ENCODE measurements at regions of chr7 and their contacts with region 1.

Region 1: DNA sequence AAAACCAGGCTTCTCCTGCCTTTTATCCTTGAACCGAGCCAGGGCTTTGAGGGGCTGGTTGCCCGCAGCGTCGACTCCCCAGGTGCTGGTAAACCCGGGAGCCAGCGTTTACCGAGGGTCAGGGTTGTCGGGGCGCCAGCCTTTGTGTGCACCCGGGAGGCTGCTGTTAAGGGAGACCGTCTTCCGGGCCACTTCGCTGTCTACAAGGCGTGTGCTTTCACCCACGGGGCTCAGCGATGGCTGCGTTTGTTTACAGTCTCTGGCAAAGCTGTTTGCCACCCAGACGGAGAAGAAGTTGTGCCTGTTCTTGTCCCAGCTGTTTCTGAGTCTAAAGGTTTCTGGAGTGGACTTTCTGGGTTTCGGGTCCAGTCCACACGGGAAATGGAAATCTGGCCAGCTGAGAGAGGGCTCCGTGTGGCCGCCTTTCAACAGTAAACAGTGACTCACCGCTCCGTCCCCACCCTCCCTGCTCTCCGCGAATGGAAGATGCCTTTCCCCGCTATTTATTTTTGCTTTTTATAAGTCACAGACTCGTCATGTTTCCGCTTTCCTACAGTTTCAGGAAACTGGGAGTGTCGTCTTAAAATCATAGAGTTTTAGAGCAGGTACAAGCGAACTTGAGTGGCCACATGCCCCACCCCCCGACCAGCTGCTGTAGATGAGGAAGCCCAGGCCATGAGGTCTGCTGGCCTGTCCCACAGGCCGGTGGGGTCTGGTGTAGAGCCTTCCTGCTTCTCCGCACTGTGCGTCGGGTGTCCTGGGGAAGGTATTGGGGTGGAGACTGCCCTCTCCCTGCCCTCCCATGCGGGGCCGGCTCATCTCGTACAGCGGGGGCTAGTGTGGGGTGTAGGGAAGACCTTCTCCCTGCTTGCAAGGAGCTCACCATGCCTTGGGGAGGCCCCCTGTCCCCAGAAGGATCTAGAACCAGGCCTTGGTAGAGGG is 2.3 kb downstream of the MAFK start:
- DNase-seq: peak; percentile 78
- ATAC-seq: peak; percentile 65
- H3K4me3 Mint-ChIP-seq: peak overlapping the region; percentile 89
- H3K27ac Mint-ChIP-seq: peak overlapping the region; percentile 89
- H3K4me1 Mint-ChIP-seq: peaks cover 27% of the 10 kb centered on the region
- H3K27me3 Mint-ChIP-seq: no peaks in the 10 kb centered on the region

Region 2: GRCh38 chr7:1368682-1369571 is 163.8 kb before region 1 on chr7:
- CTCF ChIA-PET with region 1: no interaction called
- POLR2A ChIA-PET with region 1: no interaction called
- intact Hi-C with region 1: loop called in 1 of 2 experiments (anchors 1 kb)
- DNase-seq: peak; percentile 76
- ATAC-seq: peak; percentile 81
- H3K4me3 Mint-ChIP-seq: no peak overlapping the region
- H3K27ac Mint-ChIP-seq: no peak overlapping the region
- H3K4me1 Mint-ChIP-seq: no peaks in the 10 kb centered on the region
- H3K27me3 Mint-ChIP-seq: peaks cover 43% of the 10 kb centered on the region

Region 3: DNA sequence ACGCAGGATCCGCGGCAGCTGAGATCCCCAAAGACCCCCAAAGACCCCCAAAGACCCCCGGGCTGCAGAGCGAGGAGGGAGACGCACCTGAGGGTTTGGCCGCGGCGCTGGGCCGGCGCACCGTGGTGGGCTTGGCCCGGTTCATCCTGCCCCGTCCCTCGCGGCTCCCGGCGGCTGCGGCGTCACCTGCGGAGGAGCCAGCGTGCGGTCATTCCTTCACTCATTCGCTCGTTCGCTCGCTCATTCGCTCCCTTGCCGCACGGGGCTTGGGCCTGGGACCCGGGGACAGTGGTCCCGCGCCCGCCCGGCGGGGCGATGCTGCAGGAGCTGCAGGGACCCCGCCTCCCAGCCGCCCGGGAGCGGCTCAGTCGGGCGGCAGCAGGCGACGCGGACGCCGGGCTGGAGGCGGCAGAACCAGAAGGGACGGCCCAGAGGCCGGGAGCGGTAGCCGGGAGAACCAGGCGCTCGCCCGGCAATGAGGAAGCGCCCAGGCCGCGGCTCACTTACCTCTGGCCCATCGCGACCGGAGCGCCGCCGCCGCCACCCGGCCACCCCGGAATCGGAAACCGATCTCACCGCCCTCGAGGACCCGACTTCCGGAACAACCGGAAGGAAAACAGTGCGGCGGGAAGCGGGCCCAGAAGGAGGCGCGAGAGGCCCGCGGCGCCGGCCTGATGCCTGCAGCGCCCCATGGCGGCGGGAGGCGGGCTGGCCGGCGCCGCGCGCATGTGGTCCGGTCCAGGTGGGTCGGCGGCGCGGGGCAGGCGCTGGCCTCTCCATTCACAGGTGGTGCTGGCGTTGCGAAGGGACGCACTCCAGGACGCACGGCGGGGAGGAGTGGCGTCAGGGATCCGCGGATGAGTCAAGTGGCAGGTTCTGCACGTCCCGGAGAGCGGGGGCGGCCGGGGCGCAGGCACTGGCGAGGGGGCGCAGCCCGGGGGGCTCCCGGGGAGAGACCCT is 28.7 kb before region 1 on chr7 and contains the start of gene INTS1:
- CTCF ChIA-PET with region 1: interaction called, 6 read pairs
- POLR2A ChIA-PET with region 1: no interaction called
- intact Hi-C with region 1: loop called (anchors 1 kb)
- DNase-seq: peak; percentile 95
- ATAC-seq: peak; percentile 88
- H3K4me3 Mint-ChIP-seq: peak within 1 kb of the TSS; percentile 85
- H3K27ac Mint-ChIP-seq: peak within 1 kb of the TSS; percentile 87
- H3K4me1 Mint-ChIP-seq: peaks cover 41% of the 10 kb centered on the region
- H3K27me3 Mint-ChIP-seq: no peaks in the 10 kb centered on the region
- total RNA-seq, gene INTS1: 78.1 to 81.7 TPM

Region 4: GRCh38 chr7:1569833-1570633 is 37.3 kb after region 1 on chr7 and contains the start of gene PSMG3:
- CTCF ChIA-PET with region 1: no interaction called
- POLR2A ChIA-PET with region 1: no interaction called
- intact Hi-C with region 1: loop called (anchors 1 to 5 kb)
- DNase-seq: peak; percentile 94
- ATAC-seq: peak; percentile 95
- H3K4me3 Mint-ChIP-seq: peak within 1 kb of the TSS; percentile 86
- H3K27ac Mint-ChIP-seq: peak within 1 kb of the TSS; percentile 92
- H3K4me1 Mint-ChIP-seq: peaks cover 37% of the 10 kb centered on the region
- H3K27me3 Mint-ChIP-seq: no peaks in the 10 kb centered on the region
- total RNA-seq, gene PSMG3: 21.4 to 33.0 TPM

Region 5: GRCh38 chr7:2632733-2633537 is 1100.2 kb after region 1 on chr7:
- CTCF ChIA-PET with region 1: no interaction called
- POLR2A ChIA-PET with region 1: interaction called, 3 read pairs
- intact Hi-C with region 1: loop called in 1 of 2 experiments (anchors 2 kb)
- DNase-seq: peak; percentile 77
- ATAC-seq: peak; percentile 7
- H3K4me3 Mint-ChIP-seq: peak overlapping the region; percentile 91
- H3K27ac Mint-ChIP-seq: peak overlapping the region; percentile 84
- H3K4me1 Mint-ChIP-seq: peaks cover 14% of the 10 kb centered on the region
- H3K27me3 Mint-ChIP-seq: no peaks in the 10 kb centered on the region

Measured in activated CD4-positive, alpha-beta T cell treated with anti-CD3 and anti-CD28 coated beads for 36 hours (primary cell).